ENCODE measurements at regions of chr1 and their contacts with region 1.

Region 1: GRCh38 chr1:227357171-227357880 is 39.0 kb upstream of the CDC42BPA start:
- DNase-seq: peak; percentile 70
- H3K4me3 ChIP-seq: no peak overlapping the region
- H3K27ac ChIP-seq: peak overlapping the region; percentile 77
- H3K4me1 ChIP-seq: peaks cover 19% of the 10 kb centered on the region
- H3K27me3 ChIP-seq: no peaks in the 10 kb centered on the region
- CTCF ChIP-seq: no peak

Region 2: DNA sequence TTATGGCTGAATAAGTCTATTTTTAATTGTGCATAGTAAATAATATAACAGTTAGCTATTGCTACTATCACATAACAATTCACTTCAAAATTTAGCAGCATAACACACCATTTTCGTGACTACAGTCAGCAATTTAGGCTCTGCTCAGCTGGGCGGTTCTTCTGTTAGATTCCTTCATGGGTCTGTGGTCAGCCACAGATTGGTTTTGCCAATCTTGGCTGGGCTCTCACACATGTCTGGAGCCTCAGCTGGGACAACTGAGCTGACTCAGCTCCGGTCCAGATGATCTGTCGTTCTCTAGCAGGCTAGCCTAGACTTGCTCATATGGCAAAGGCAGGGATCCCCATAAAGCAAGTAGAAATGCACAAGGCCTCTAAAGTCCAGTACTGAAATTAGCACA is 23.9 kb before region 1 on chr1:
- CTCF ChIA-PET with region 1: no interaction called
- dilution Hi-C with region 1: no loop called
- in situ Hi-C with region 1: no loop called
- intact Hi-C with region 1: loop called (anchors 2 kb)
- DNase-seq: peak; percentile 89
- H3K4me3 ChIP-seq: no peak overlapping the region
- H3K27ac ChIP-seq: no peak overlapping the region
- H3K4me1 ChIP-seq: no peaks in the 10 kb centered on the region
- H3K27me3 ChIP-seq: no peaks in the 10 kb centered on the region
- CTCF ChIP-seq: no peak

Region 3: DNA sequence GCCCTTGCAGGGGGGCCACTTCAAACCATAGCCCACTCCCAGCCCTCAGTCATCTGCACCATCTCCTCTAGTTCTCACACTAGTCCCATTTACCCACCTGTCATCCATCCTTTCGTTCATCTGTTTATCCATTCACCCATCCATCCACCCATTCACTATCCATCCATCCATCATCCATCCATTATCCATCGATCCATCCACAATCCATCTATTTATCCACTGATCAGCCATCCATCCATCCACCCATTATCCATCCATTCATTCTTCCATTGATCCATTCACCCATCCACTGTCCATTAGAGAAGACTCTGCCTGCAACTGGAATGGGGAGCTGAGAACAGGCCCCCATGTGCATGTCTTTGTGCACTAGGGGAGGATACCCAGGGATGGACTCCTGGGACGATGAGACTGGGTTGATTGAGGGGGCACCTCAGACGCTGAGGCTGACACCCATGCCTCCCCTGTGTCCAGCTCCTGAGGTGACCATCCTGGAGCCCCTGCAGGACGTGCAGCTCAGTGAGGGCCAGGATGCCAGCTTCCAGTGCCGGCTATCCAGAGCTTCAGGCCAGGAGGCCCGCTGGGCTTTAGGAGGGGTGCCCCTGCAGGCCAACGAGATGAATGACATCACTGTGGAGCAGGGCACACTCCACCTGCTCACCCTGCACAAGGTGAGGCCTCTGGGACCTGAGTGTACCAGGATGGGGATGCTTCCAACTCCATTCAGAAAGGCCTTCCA is 951.5 kb after region 1 on chr1:
- CTCF ChIA-PET with region 1: no interaction called
- dilution Hi-C with region 1: no loop called
- in situ Hi-C with region 1: no loop called
- intact Hi-C with region 1: no loop called
- DNase-seq: no peak
- H3K4me3 ChIP-seq: no peak overlapping the region
- H3K27ac ChIP-seq: no peak overlapping the region
- H3K4me1 ChIP-seq: no peaks in the 10 kb centered on the region
- H3K27me3 ChIP-seq: no peaks in the 10 kb centered on the region
- CTCF ChIP-seq: peak; percentile 4 to 5